Caco-2 (cell line): ENCODE measurements at regions of chr2 and their contacts with region 1.

Region 1: GRCh38 chr2:168622559-168622958 is 166.5 kb downstream of the CERS6 start:
- DNase-seq: peak in 1 of 2 experiments; percentile 42
- H3K4me3 ChIP-seq: no peak overlapping the region
- H3K4me3 Mint-ChIP-seq: peak overlapping the region; percentile 30
- H3K27ac Mint-ChIP-seq: peak overlapping the region; percentile 72
- H3K4me1 ChIP-seq: peaks cover 26% of the 10 kb centered on the region
- H3K4me1 Mint-ChIP-seq: peaks cover 34% of the 10 kb centered on the region
- H3K27me3 ChIP-seq: no peaks in the 10 kb centered on the region
- H3K27me3 Mint-ChIP-seq: no peaks in the 10 kb centered on the region
- CTCF ChIP-seq: no peak

Region 2: GRCh38 chr2:168608796-168609195 is 13.8 kb before region 1 on chr2:
- CTCF ChIA-PET with region 1: no interaction called
- POLR2A ChIA-PET with region 1: no interaction called
- intact Hi-C with region 1: loop called (anchors 1 kb)
- DNase-seq: no peak
- H3K4me3 ChIP-seq: no peak overlapping the region
- H3K4me3 Mint-ChIP-seq: no peak overlapping the region
- H3K27ac Mint-ChIP-seq: no peak overlapping the region
- H3K4me1 ChIP-seq: no peaks in the 10 kb centered on the region
- H3K4me1 Mint-ChIP-seq: peaks cover 10% of the 10 kb centered on the region
- H3K27me3 ChIP-seq: no peaks in the 10 kb centered on the region
- H3K27me3 Mint-ChIP-seq: no peaks in the 10 kb centered on the region
- CTCF ChIP-seq: no peak